Calu3 (cell line): ENCODE measurements at regions of chr14 and their contacts with region 1.

Region 1: DNA sequence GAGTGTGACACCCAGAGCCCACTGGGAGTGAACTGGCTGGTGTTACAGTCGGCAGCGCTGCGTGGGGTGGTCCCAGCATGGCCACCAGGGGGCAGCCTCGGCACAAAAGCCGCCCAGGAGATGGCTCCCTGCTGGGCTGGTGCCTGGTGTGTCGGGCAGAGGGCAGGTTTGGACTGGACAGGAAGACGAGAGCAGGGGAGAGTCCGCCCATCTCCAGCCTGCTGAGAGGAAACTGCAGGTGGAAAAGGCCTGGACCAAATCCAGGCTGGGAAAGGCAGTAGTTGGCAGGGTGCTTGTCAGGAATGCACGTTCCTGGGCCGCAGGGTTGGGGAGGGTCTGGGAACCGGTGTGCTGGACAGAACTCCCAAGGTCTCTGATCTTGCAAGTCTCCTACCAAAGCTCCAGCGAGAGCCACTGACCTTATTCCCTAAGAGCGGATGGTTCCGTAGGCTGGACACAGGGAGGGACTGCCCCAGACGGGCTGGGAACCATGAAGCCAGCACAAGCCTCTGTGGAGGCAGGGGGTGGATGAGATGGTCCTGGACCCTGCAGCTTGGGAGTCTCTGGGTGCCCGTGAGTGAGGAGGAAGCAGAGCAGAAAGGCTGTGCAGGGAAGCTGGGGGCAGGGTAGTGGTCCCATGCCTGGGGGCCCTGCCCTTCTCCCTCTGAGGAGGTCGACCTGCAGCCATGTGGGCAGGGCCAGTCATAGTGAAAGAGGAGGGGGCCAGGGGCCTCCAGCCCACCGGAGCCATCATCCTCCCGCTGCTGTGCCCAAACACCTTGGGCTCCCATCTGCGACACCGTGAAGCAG is 1.8 kb downstream of the AHNAK2 start:
- DNase-seq: peak; percentile 93
- H3K4me3 Mint-ChIP-seq: peak overlapping the region; percentile 92
- H3K27ac Mint-ChIP-seq: peak overlapping the region; percentile 54
- H3K4me1 Mint-ChIP-seq: peaks cover 52% of the 10 kb centered on the region
- H3K27me3 Mint-ChIP-seq: no peaks in the 10 kb centered on the region
- CTCF ChIP-seq: peak; percentile 91

Region 2: GRCh38 chr14:104895786-104896661 is 80.4 kb before region 1 on chr14:
- CTCF ChIA-PET with region 1: no interaction called
- intact Hi-C with region 1: loop called (anchors 10 kb)
- DNase-seq: no peak
- H3K4me3 Mint-ChIP-seq: no peak overlapping the region
- H3K27ac Mint-ChIP-seq: no peak overlapping the region
- H3K4me1 Mint-ChIP-seq: peaks cover 10% of the 10 kb centered on the region
- H3K27me3 Mint-ChIP-seq: no peaks in the 10 kb centered on the region
- CTCF ChIP-seq: no peak

Region 3: DNA sequence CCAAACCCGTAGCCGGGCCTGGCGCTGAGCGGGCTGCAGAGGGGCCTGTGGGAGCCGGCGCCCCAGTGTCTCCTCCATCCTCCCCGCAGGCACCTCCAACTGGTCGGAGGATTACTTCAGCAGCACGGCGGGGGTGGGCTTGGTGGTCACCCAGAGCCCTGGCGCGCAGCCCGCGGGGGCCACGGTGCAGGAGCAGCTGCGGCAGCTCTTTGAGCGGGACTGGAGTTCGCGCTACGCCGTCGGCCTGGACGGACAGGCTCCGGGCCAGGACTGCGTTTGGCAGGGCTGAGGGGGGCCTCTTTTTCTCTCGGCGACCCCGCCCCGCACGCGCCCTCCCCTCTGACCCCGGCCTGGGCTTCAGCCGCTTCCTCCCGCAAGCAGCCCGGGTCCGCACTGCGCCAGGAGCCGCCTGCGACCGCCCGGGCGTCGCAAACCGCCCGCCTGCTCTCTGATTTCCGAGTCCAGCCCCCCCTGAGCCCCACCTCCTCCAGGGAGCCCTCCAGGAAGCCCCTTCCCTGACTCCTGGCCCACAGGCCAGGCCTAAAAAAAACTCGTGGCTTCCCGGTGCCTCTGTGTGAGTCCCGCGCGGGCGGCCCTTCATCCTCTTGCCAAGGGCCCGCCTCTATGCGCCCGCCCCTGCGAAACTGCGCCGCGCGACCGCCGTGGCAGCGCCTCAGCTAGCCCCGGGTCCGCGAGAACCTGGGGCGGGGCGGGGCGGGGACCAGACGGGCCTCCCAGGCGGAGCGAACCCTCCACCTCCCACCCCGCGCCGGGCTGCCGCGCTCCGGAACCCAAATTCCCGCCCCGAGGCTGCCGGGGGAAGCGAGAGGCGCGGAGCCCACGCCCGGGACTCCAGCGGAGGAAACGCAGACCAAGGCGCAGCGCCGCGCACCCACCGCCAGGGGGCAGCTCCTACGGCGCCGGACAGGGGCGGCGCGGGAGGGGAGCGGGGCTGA is 43.4 kb before region 1 on chr14:
- CTCF ChIA-PET with region 1: interaction called, 5 read pairs
- intact Hi-C with region 1: loop called (anchors 5 kb)
- DNase-seq: peak; percentile 91
- H3K4me3 Mint-ChIP-seq: peak overlapping the region; percentile 72
- H3K27ac Mint-ChIP-seq: no peak overlapping the region
- H3K4me1 Mint-ChIP-seq: no peaks in the 10 kb centered on the region
- H3K27me3 Mint-ChIP-seq: no peaks in the 10 kb centered on the region
- CTCF ChIP-seq: peak; percentile 61

Region 4: DNA sequence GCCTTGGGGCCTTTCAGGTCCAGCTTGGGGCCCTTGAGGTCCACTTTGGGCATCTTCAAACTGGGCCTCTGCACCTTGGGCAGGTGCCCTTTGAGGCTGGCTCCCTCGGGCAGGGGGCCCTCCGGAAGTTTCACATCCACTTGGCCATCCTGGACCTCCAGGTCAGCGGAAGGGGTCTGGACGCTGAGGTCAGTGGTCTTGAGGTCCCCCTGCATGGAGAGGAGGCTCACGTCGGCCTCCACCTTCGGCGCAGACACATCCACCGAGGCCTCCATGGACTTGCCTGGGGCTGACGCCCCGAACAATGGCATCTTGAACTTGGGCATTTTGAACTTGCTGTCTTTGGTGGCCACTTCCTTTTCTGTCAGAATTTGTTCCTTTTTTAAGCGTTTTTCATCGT is 23.3 kb before region 1 on chr14:
- CTCF ChIA-PET with region 1: no interaction called
- intact Hi-C with region 1: no loop called
- DNase-seq: no peak
- H3K4me3 Mint-ChIP-seq: no peak overlapping the region
- H3K27ac Mint-ChIP-seq: peak overlapping the region; percentile 2
- H3K4me1 Mint-ChIP-seq: peaks cover 8% of the 10 kb centered on the region
- H3K27me3 Mint-ChIP-seq: no peaks in the 10 kb centered on the region
- CTCF ChIP-seq: no peak

Region 5: GRCh38 chr14:105020815-105021655 is 44.6 kb after region 1 on chr14 and contains the start of gene CDCA4:
- CTCF ChIA-PET with region 1: interaction called, 4 read pairs
- intact Hi-C with region 1: loop called (anchors 5 kb)
- DNase-seq: peak; percentile 98
- H3K4me3 Mint-ChIP-seq: peak within 1 kb of the TSS; percentile 96
- H3K27ac Mint-ChIP-seq: peak within 1 kb of the TSS; percentile 97
- H3K4me1 Mint-ChIP-seq: peaks cover 38% of the 10 kb centered on the region
- H3K27me3 Mint-ChIP-seq: no peaks in the 10 kb centered on the region
- CTCF ChIP-seq: no peak
- total RNA-seq, gene CDCA4: 28.9 and 32.4 TPM in 2 replicates